Posterior cingulate gyrus (tissue), 11 donors: ENCODE measurements at regions of chr3 and their contacts with region 1.

Region 1: DNA sequence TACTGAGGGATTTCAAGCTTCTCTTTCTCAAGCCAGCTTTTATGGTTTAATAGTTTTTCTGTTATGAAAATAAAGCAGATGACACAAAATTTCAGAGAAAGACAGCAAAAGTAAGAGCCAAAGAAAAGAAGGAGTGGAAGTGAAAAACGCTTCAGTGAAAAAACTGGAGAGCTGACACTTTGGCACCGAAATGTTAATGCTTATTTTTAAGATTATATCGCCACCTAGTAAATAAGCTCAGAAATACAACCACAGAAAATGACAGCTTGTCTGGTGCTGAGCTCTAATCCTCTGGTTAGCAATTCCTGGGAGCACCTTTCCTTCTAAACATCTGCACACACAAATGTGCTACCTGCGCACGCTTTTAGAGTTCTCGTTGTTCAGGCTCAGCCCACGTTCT is 101.6 kb downstream of the ZPLD1 start:
- DNase-seq: no peak

Region 2: GRCh38 chr3:101803173-101803782 is 733.2 kb before region 1 on chr3:
- intact Hi-C with region 1: loop called (anchors 5 kb)
- DNase-seq: peak in 3 of 10 donors; percentile 30 to 61 (median 42)

Region 3: GRCh38 chr3:102466001-102466400 is 70.5 kb before region 1 on chr3:
- intact Hi-C with region 1: no loop called
- DNase-seq: no peak

Region 4: DNA sequence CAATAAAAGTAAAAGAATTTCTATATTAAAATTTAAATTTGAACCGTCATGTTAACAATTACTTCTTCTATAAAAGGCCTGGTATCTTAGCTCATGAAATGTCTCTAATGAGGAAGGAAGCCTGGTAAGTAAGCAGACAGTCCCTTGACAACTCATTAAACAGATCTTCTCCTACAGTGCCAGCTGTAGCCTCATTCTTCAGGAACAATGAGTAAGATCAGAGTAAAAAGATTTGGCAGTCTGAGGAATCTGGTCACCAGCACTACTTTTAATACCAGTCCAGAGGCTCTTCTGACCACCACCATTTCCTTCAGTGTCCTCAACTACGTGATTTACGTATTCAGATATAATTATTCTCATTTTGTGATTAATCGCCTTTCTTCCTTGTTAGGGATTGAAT is 1875.3 kb after region 1 on chr3:
- intact Hi-C with region 1: no loop called
- DNase-seq: no peak